ENCODE measurements at regions of chr15 and their contacts with region 1.

Region 1: GRCh38 chr15:90931737-90932659 is at the start of gene HDDC3:
- DNase-seq: peak; percentile 63
- ATAC-seq: peak; percentile 74
- H3K4me3 ChIP-seq: peak within 1 kb of the TSS; percentile 90
- H3K27ac ChIP-seq: peak within 1 kb of the TSS; percentile 85
- H3K4me1 ChIP-seq: peaks cover 35% of the 10 kb centered on the region
- H3K27me3 ChIP-seq: no peaks in the 10 kb centered on the region
- CTCF ChIP-seq: peak; percentile 91 to 98 (median 92)
- EP300 ChIP-seq: no peak
- POLR2A ChIP-seq: peak; percentile 86
- RAD21 ChIP-seq: peak; percentile 54; the same call in 1 of the 2 replicates
- polyA plus RNA-seq, gene HDDC3: 5.6 to 9.0 TPM

Region 2: GRCh38 chr15:90648137-90649070 is 283.6 kb before region 1 on chr15:
- CTCF ChIA-PET with region 1: interaction called, 47 read pairs
- POLR2A ChIA-PET with region 1: interaction called, 6 read pairs
- RAD21 ChIA-PET with region 1: interaction called, 47 read pairs
- SMC1A ChIA-PET with region 1: interaction called, 18 read pairs
- in situ Hi-C with region 1: no loop called
- intact Hi-C with region 1: loop called (anchors 5 kb)
- DNase-seq: no peak
- ATAC-seq: peak; percentile 84
- H3K4me3 ChIP-seq: no peak overlapping the region
- H3K27ac ChIP-seq: peak overlapping the region; percentile 89
- H3K4me1 ChIP-seq: peaks cover 14% of the 10 kb centered on the region
- H3K27me3 ChIP-seq: no peaks in the 10 kb centered on the region
- CTCF ChIP-seq: peak; percentile 79 to 88 (median 84)
- EP300 ChIP-seq: 0 out of 4 replicates have a peak, but pooled peaks of 1 of the 2 experiments have one; percentile 20
- POLR2A ChIP-seq: no peak
- RAD21 ChIP-seq: peak; percentile 98

Region 3: GRCh38 chr15:90818251-90819210 is 113.5 kb before region 1 on chr15:
- CTCF ChIA-PET with region 1: interaction called, 13 read pairs
- POLR2A ChIA-PET with region 1: interaction called, 7 read pairs
- RAD21 ChIA-PET with region 1: interaction called, 3 read pairs
- SMC1A ChIA-PET with region 1: interaction called, 11 read pairs
- in situ Hi-C with region 1: no loop called
- intact Hi-C with region 1: no loop called
- DNase-seq: no peak
- ATAC-seq: peak; percentile 71
- H3K4me3 ChIP-seq: no peak overlapping the region
- H3K27ac ChIP-seq: no peak overlapping the region
- H3K4me1 ChIP-seq: peaks cover 25% of the 10 kb centered on the region
- H3K27me3 ChIP-seq: no peaks in the 10 kb centered on the region
- CTCF ChIP-seq: peak; percentile 21 to 38 (median 33); a peak in 3 of 6 replicates
- EP300 ChIP-seq: no peak
- POLR2A ChIP-seq: no peak
- RAD21 ChIP-seq: peak; percentile 63

Region 4: GRCh38 chr15:90886041-90886614 is 45.9 kb before region 1 on chr15:
- CTCF ChIA-PET with region 1: interaction called, 104 read pairs
- POLR2A ChIA-PET with region 1: interaction called, 6 read pairs
- RAD21 ChIA-PET with region 1: interaction called, 54 read pairs
- SMC1A ChIA-PET with region 1: interaction called, 45 read pairs
- in situ Hi-C with region 1: no loop called
- intact Hi-C with region 1: no loop called
- DNase-seq: no peak
- ATAC-seq: peak; percentile 83
- H3K4me3 ChIP-seq: no peak overlapping the region; the same call in 1 of the 2 replicates
- H3K27ac ChIP-seq: peak overlapping the region; percentile 2; the same call in 1 of the 2 replicates
- H3K4me1 ChIP-seq: peaks cover 19% of the 10 kb centered on the region
- H3K27me3 ChIP-seq: no peaks in the 10 kb centered on the region
- CTCF ChIP-seq: peak; percentile 96 to 98 (median 97)
- EP300 ChIP-seq: no peak
- POLR2A ChIP-seq: no peak
- RAD21 ChIP-seq: peak; percentile 99

Region 5: GRCh38 chr15:90954712-90955671 is 23.0 kb after region 1 on chr15 and contains the start of gene RCCD1:
- CTCF ChIA-PET with region 1: interaction called, 74 read pairs
- POLR2A ChIA-PET with region 1: interaction called, 14 read pairs
- RAD21 ChIA-PET with region 1: interaction called, 24 read pairs
- SMC1A ChIA-PET with region 1: interaction called, 18 read pairs
- in situ Hi-C with region 1: no loop called
- intact Hi-C with region 1: loop called (anchors 1 kb)
- DNase-seq: peak; percentile 91
- ATAC-seq: peak; percentile 98
- H3K4me3 ChIP-seq: peak within 1 kb of the TSS; percentile 87
- H3K27ac ChIP-seq: peak within 1 kb of the TSS; percentile 98
- H3K4me1 ChIP-seq: peaks cover 3% of the 10 kb centered on the region; the same call in 1 of the 2 replicates
- H3K27me3 ChIP-seq: no peaks in the 10 kb centered on the region
- CTCF ChIP-seq: no peak
- EP300 ChIP-seq: no peak; a peak in 1 of 4 replicates
- POLR2A ChIP-seq: peak; percentile 93
- RAD21 ChIP-seq: no peak
- polyA plus RNA-seq, gene RCCD1: 5.2 to 8.0 TPM

Region 6: DNA sequence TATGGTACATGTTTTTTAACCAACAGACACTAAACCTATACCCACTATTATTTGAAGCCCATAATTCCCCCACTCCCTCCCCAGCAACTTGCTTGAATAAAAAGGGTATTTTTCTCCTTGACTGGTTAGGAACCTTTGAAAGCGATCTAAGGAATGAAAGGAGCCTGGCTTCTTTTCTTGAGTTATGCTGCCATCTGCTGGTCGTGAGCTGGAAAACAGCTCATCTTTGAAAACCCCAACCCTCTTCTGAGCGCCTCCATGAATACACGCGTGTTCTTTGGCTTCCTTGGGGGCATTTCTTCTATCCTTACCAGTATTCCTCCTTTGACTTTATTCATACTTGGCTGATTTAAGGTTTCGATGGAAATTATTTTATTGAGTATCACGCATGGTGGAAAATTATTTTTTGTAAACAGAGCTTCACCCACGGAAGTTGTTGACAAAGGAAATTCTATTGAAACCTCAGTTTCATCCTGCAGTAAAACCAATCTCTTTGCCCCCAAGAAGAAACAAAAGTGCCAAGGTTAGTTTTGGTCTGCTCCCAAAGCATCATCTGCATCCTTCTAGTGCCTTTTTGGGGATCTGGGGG is 339.7 kb after region 1 on chr15:
- CTCF ChIA-PET with region 1: interaction called, 25 read pairs
- POLR2A ChIA-PET with region 1: no interaction called
- RAD21 ChIA-PET with region 1: interaction called, 10 read pairs
- SMC1A ChIA-PET with region 1: interaction called, 4 read pairs
- in situ Hi-C with region 1: no loop called
- intact Hi-C with region 1: no loop called
- DNase-seq: peak; percentile 19
- ATAC-seq: peak; percentile 88
- H3K4me3 ChIP-seq: no peak overlapping the region
- H3K27ac ChIP-seq: no peak overlapping the region
- H3K4me1 ChIP-seq: no peaks in the 10 kb centered on the region
- H3K27me3 ChIP-seq: no peaks in the 10 kb centered on the region; a peak in 1 of 4 replicates
- CTCF ChIP-seq: peak; percentile 70 to 86 (median 72)
- EP300 ChIP-seq: no peak
- POLR2A ChIP-seq: no peak
- RAD21 ChIP-seq: peak; percentile 94

Region 7: DNA sequence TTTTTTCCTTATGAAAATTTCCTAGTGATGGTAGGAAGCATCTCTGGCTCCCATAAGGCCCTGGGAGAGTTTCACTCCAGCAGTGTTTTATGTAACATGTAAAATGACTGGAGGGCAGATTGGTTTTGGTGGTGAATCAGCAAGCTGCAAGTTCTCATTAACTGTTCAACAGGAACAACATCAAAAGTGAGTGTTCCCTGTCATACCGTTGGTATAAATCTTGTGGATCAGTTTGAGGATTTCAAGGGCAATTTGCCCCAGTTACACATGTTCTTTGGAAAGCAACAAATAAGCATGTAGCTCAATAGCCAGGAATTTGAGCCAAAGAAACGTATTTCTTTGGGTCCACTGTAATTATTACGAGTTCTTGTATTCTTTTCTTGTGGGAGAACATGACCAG is 513.8 kb after region 1 on chr15:
- CTCF ChIA-PET with region 1: no interaction called
- POLR2A ChIA-PET with region 1: no interaction called
- RAD21 ChIA-PET with region 1: no interaction called
- SMC1A ChIA-PET with region 1: no interaction called
- in situ Hi-C with region 1: no loop called
- intact Hi-C with region 1: no loop called
- DNase-seq: no peak
- ATAC-seq: no peak
- H3K4me3 ChIP-seq: no peak overlapping the region
- H3K27ac ChIP-seq: no peak overlapping the region
- H3K4me1 ChIP-seq: no peaks in the 10 kb centered on the region
- H3K27me3 ChIP-seq: no peaks in the 10 kb centered on the region
- CTCF ChIP-seq: no peak
- EP300 ChIP-seq: no peak
- POLR2A ChIP-seq: no peak
- RAD21 ChIP-seq: no peak

Measured in GM12878 (cell line).